Left lung (tissue), 14 donors: ENCODE measurements at regions of chr7 and their contacts with region 1.

Region 1: DNA sequence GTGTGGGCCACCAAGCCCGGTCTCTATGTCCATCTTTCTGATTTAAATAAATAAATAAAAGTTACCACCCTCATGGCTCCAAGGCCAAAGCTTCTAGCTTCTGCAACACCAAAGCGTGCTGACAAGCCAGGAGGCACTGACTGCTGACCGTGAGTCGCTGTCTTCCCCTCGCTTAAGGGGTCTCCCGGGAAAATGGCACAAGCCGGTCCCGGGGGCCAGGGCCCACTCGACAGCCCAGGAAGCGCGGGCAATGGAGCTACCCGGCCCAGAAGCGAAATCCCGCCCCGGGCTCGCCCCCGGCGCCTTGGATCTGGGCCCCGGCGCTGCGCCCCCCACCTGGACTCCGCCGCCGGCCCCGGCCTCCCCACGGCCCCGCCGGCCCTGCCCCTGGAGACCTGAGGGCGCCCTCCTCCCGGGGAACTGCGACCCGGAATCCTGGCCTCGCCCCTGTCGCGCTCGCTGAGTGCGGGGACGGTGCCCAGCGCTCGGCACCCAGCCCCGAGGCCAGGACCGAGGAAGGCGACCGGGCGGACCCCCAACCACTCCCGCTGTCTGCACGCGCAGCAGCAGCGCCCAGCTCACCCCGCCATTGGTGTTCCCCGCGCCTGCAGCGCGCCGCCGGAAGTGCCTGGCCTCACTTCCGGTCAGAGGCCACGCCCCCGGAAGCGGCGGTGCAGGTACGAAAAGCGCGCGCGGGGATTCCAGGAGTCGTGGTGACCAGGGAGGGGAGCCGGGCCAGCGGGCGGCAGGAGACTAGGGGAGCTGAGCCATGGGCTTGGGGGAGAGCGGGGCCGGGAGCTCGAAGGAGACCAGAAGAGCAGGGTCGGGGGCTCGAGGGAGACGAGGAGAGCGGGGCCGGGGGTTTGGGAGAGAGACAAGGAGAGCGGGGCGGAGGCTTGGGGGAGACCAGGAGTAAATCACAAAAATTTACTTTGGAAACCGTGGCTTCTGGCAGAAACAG is at the starts of genes MRM2 and NUDT1:
- DNase-seq: peak; percentile 76 to 96 (median 84)
- ATAC-seq: peak; percentile 90
- H3K4me3 ChIP-seq: peak within 1 kb of the TSS; percentile 97 to 98
- H3K27ac ChIP-seq: peak within 1 kb of the TSS; percentile 44 to 77
- H3K4me1 ChIP-seq: peaks cover 17 to 50% of the 10 kb centered on the region in 2 donors
- H3K27me3 ChIP-seq: no peaks in the 10 kb centered on the region
- CTCF ChIP-seq: no peak
- polyA plus RNA-seq, gene MRM2: 27.2 to 36.6 (median 32.3) TPM
- polyA plus RNA-seq, gene NUDT1: 16.6 to 26.3 (median 20.8) TPM

Region 2: DNA sequence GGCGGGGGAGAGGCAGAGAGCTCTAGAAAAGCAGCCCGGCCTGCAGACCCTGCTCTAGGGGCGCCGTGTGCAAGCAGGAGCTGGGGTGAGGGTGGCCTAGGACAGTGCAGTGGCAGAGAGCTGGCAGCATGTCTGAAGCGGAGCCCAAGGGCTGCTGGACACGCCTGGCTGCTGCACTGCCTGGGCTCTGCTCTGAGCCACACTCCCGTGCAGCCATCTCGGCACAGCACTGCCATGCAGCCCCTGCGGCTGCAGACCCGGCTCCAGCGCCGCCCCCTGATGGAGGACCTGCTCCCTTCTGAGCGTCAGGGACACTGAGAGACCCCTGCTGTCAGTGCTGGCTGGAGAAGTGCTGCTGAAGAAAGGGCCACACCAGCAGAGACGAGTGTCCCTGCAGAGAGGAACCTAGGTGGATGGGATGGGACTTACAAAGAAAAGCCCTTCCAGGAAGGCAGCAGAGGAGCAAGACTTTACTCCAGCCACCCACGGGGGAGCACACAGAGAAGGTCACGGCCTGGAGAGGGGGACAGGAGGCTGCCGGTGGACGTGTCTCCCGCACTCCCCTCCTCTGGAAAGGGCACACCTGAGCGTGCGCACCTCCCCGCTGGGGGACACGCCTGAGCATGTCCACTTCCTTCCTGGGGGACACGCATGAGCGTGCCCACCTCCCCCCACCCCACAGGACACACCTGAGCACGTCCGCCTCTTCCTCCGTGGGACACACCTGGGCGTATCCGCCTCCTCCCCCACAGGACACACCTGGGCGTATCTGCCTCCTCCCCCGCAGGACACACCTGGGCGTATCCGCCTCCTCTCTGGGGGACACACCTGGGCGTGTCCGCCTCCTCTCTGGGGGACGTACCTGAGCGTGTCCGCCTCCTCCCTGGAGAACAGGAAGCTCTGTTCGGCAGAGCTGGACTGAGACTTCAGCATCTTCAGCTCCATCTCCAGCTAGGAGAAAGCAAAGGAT is 262.0 kb before region 1 on chr7:
- intact Hi-C with region 1: no loop called
- DNase-seq: peak in 2 of 4 donors; percentile 30 to 78
- ATAC-seq: no peak
- H3K4me3 ChIP-seq: no peak overlapping the region
- H3K27ac ChIP-seq: no peak overlapping the region
- H3K4me1 ChIP-seq: no peaks in the 10 kb centered on the region
- H3K27me3 ChIP-seq: no peaks in the 10 kb centered on the region
- CTCF ChIP-seq: no peak

Region 3: GRCh38 chr7:2314209-2314955 is 72.5 kb after region 1 on chr7 and contains the start of gene SNX8:
- intact Hi-C with region 1: loop called in 1 of 2 experiments (anchors 10 kb)
- DNase-seq: peak; percentile 78 to 99 (median 92)
- ATAC-seq: peak; percentile 100
- H3K4me3 ChIP-seq: peak within 1 kb of the TSS; percentile 89 to 91
- H3K27ac ChIP-seq: peak within 1 kb of the TSS; percentile 53 to 85
- H3K4me1 ChIP-seq: peaks cover 0 to 10% of the 10 kb centered on the region in 2 donors
- H3K27me3 ChIP-seq: no peaks in the 10 kb centered on the region
- CTCF ChIP-seq: no peak
- polyA plus RNA-seq, gene SNX8: 17.0 to 29.8 (median 24.1) TPM

Region 4: GRCh38 chr7:2354186-2354938 is 112.5 kb after region 1 on chr7 and contains the start of gene EIF3B:
- intact Hi-C with region 1: loop called in 1 of 2 experiments (anchors 10 kb)
- DNase-seq: peak; percentile 90 to 99 (median 95)
- ATAC-seq: peak; percentile 93
- H3K4me3 ChIP-seq: peak within 1 kb of the TSS; percentile 96 to 98
- H3K27ac ChIP-seq: peak within 1 kb of the TSS; percentile 99 to 100
- H3K4me1 ChIP-seq: peaks cover 33 to 50% of the 10 kb centered on the region in 2 donors
- H3K27me3 ChIP-seq: no peaks in the 10 kb centered on the region
- CTCF ChIP-seq: no peak
- polyA plus RNA-seq, gene EIF3B: 142 to 168 (median 159) TPM